Right lobe of liver (tissue), 6 donors: ENCODE measurements at regions of chr19 and their contacts with region 1.

Region 1: GRCh38 chr19:9934132-9934950 is 2.0 kb downstream of the OLFM2 start:
- DNase-seq: peak; percentile 69 to 85 (median 72)
- ATAC-seq: peak; percentile 89 to 93 (median 92)
- H3K4me3 ChIP-seq: no peak overlapping the region
- H3K27ac ChIP-seq: no peak overlapping the region
- H3K4me1 ChIP-seq: peaks cover 0 to 15% (median 2%) of the 10 kb centered on the region in 4 donors
- H3K27me3 ChIP-seq: no peaks in the 10 kb centered on the region
- CTCF ChIP-seq: peak; percentile 91 to 98 (median 92)
- POLR2A ChIP-seq: no peak

Region 2: GRCh38 chr19:10027158-10027693 is 92.9 kb after region 1 on chr19:
- intact Hi-C with region 1: loop called (anchors 5 to 10 kb)
- DNase-seq: no peak
- ATAC-seq: no peak
- H3K4me3 ChIP-seq: no peak overlapping the region
- H3K27ac ChIP-seq: no peak overlapping the region
- H3K4me1 ChIP-seq: peaks cover 0 to 20% (median 0%) of the 10 kb centered on the region in 4 donors
- H3K27me3 ChIP-seq: no peaks in the 10 kb centered on the region
- CTCF ChIP-seq: no peak
- POLR2A ChIP-seq: no peak